HepG2 (cell line): ENCODE measurements at regions of chr2 and their contacts with region 1.

Region 1: GRCh38 chr2:102027036-102027980 is 35.5 kb downstream of the IL1R2 start:
- DNase-seq: no peak
- ATAC-seq: peak; percentile 26; the same call in 2 of the 3 replicates
- H3K4me3 ChIP-seq: no peak overlapping the region
- H3K27ac ChIP-seq: peak overlapping the region; percentile 42
- H3K4me1 ChIP-seq: peaks cover 99% of the 10 kb centered on the region
- H3K27me3 ChIP-seq: no peaks in the 10 kb centered on the region
- CTCF ChIP-seq: no peak
- EP300 ChIP-seq: no peak
- POLR2A ChIP-seq: no peak
- RAD21 ChIP-seq: no peak

Region 2: DNA sequence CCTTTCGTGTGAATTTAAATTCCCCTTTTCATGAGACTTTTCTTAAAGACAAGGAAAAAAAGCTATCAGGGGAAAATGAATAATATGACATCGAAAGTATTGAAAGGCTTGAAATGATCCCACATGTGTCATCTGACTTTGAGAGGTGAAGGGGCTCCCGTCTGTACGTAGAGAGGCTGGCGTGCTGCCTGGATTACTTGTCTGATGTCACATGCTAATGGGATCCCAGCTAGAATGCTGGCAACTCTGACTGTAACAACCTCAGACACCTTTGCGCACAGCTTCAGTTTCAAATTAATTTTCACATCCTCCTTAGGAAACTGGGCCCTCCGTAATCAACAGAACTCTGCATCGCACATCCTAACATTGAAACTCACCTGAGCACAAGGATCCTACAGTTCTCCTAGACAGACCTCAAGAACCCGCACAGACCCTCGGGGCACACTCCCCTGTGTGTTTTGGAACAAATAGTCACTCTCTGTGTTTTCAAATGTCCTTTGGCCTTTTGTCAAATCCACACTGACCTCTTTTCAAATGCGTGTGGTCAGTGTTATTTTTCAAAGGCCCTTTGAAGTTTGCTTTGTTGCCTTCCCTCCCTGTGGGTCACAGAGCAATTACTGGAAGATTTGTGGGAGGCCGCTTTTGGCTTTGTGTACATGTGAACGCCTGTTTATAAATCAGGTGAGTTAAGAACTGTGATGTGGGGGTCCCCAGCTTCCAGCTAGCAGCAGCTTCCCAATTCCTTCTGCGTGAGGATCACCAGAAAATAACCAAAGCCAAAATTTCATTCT is 30.4 kb after region 1 on chr2:
- CTCF ChIA-PET with region 1: no interaction called
- POLR2A ChIA-PET with region 1: interaction called, 35 read pairs
- in situ Hi-C with region 1: no loop called
- intact Hi-C with region 1: loop called (anchors 1 kb)
- DNase-seq: peak; percentile 98
- ATAC-seq: peak; percentile 88
- H3K4me3 ChIP-seq: peak overlapping the region in 1 of 3 experiments; percentile 39; a peak in 1 of 6 replicates
- H3K27ac ChIP-seq: peak overlapping the region; percentile 89
- H3K4me1 ChIP-seq: peaks cover 89% of the 10 kb centered on the region
- H3K27me3 ChIP-seq: no peaks in the 10 kb centered on the region
- CTCF ChIP-seq: no peak
- EP300 ChIP-seq: peak; percentile 76 to 100; a peak in 3 of 4 replicates
- POLR2A ChIP-seq: no peak
- RAD21 ChIP-seq: peak; percentile 14; the same call in 1 of the 2 replicates